AG04450 (cell line): ENCODE measurements at regions of chr9 and their contacts with region 1.

Region 1: GRCh38 chr9:132409828-132410528 is at the start of gene CFAP77:
- DNase-seq: peak; percentile 13
- H3K4me3 ChIP-seq: peak within 1 kb of the TSS; percentile 57
- H3K27ac ChIP-seq: no peak within 1 kb of the TSS
- H3K27me3 ChIP-seq: peaks cover 46% of the 10 kb centered on the region
- CTCF ChIP-seq: no peak
- polyA plus RNA-seq, gene CFAP77: not detected in 2 replicates

Region 2: GRCh38 chr9:132472199-132472598 is 62.2 kb after region 1 on chr9:
- CTCF ChIA-PET with region 1: no interaction called
- POLR2A ChIA-PET with region 1: no interaction called
- DNase-seq: no peak
- H3K4me3 ChIP-seq: no peak overlapping the region
- H3K27ac ChIP-seq: no peak overlapping the region
- H3K27me3 ChIP-seq: peaks cover 32% of the 10 kb centered on the region
- CTCF ChIP-seq: no peak

Region 3: DNA sequence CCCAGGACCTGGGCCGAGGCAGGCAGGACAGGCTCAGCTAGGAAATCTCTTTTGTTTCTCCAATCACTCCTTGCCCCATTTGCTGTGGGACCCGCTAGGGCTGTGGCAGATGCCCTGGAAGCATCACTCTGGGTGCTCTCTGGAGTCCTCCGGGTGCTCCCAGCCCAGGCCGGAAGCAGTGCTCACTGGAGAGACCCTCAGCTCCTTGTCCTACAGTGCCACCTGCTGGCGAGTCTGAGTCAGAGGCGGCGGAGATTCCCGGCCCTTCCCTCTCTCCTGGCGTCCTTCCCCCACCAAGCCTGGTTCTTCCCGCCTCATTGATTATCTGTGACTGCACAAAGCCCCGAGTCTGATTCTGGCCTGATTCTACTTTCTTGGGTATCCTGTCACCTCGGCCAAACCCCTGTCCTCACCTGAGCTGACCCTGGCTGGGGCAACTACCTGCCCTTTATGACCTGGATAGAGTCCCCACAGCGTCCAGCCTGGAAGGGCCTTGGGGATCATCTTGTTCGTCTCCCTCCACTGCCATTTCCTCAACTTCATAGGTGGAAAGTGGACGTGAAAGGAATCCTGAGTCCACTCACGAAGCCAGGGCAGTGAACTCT is 165.1 kb after region 1 on chr9:
- CTCF ChIA-PET with region 1: interaction called, 11 read pairs
- POLR2A ChIA-PET with region 1: no interaction called
- DNase-seq: peak; percentile 18
- H3K4me3 ChIP-seq: no peak overlapping the region
- H3K27ac ChIP-seq: no peak overlapping the region
- H3K27me3 ChIP-seq: peaks cover 51% of the 10 kb centered on the region
- CTCF ChIP-seq: peak; percentile 91